Heart left ventricle (tissue), 16 donors: ENCODE measurements at regions of chr1 and their contacts with region 1.

Region 1: GRCh38 chr1:210568631-210569030 is 239.9 kb downstream of the HHAT start:
- DNase-seq: no peak
- ATAC-seq: no peak
- H3K4me3 ChIP-seq: no peak overlapping the region
- H3K27ac ChIP-seq: no peak overlapping the region
- H3K4me1 ChIP-seq: no peaks in the 10 kb centered on the region
- H3K27me3 ChIP-seq: no peaks in the 10 kb centered on the region
- CTCF ChIP-seq: no peak
- POLR2A ChIP-seq: no peak

Region 2: GRCh38 chr1:210455840-210456603 is 112.6 kb before region 1 on chr1:
- intact Hi-C with region 1: loop called in 1 of 10 experiments (anchors 10 kb)
- DNase-seq: no peak
- ATAC-seq: no peak
- H3K4me3 ChIP-seq: no peak overlapping the region
- H3K27ac ChIP-seq: no peak overlapping the region
- H3K4me1 ChIP-seq: no peaks in the 10 kb centered on the region
- H3K27me3 ChIP-seq: no peaks in the 10 kb centered on the region
- CTCF ChIP-seq: no peak
- POLR2A ChIP-seq: no peak

Region 3: DNA sequence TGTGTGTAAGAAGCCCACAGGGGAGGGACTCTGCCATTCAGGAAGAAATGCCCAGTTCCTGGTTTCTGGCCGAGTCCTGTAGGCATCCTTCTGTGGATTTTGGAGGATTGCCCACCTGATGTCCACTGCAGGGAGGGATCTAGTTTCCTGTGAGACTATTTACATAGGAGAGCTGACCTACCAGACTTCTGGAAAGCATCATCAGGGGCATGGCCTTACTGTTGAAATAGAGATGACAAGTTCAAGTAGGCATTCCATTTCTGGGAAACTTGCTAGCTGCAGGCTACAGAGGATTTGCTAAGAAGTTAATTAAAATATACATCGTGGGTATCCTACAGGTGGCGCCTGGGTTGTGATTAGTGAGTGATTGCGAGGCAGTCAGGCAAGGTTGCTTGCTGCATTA is 91.2 kb before region 1 on chr1:
- intact Hi-C with region 1: loop called in 1 of 10 experiments (anchors 10 kb)
- DNase-seq: no peak
- ATAC-seq: peak; percentile 34 to 75 (median 58)
- H3K4me3 ChIP-seq: no peak overlapping the region
- H3K27ac ChIP-seq: no peak overlapping the region
- H3K4me1 ChIP-seq: peaks cover 0 to 8% (median 0%) of the 10 kb centered on the region in 12 donors
- H3K27me3 ChIP-seq: no peaks in the 10 kb centered on the region
- CTCF ChIP-seq: no peak
- POLR2A ChIP-seq: no peak

Region 4: GRCh38 chr1:210711825-210712612 is 143.4 kb after region 1 on chr1:
- intact Hi-C with region 1: no loop called
- DNase-seq: peak in 2 of 5 donors; percentile 34 to 48
- ATAC-seq: peak in 3 of 4 donors; percentile 39 to 80 (median 54)
- H3K4me3 ChIP-seq: no peak overlapping the region
- H3K27ac ChIP-seq: no peak overlapping the region
- H3K4me1 ChIP-seq: peaks cover 0 to 2% (median 0%) of the 10 kb centered on the region in 12 donors
- H3K27me3 ChIP-seq: no peaks in the 10 kb centered on the region
- CTCF ChIP-seq: peak in 5 of 12 donors; percentile 14 to 44 (median 23)
- POLR2A ChIP-seq: no peak